Caco-2 (cell line): ENCODE measurements at regions of chr11 and their contacts with region 1.

Region 1: DNA sequence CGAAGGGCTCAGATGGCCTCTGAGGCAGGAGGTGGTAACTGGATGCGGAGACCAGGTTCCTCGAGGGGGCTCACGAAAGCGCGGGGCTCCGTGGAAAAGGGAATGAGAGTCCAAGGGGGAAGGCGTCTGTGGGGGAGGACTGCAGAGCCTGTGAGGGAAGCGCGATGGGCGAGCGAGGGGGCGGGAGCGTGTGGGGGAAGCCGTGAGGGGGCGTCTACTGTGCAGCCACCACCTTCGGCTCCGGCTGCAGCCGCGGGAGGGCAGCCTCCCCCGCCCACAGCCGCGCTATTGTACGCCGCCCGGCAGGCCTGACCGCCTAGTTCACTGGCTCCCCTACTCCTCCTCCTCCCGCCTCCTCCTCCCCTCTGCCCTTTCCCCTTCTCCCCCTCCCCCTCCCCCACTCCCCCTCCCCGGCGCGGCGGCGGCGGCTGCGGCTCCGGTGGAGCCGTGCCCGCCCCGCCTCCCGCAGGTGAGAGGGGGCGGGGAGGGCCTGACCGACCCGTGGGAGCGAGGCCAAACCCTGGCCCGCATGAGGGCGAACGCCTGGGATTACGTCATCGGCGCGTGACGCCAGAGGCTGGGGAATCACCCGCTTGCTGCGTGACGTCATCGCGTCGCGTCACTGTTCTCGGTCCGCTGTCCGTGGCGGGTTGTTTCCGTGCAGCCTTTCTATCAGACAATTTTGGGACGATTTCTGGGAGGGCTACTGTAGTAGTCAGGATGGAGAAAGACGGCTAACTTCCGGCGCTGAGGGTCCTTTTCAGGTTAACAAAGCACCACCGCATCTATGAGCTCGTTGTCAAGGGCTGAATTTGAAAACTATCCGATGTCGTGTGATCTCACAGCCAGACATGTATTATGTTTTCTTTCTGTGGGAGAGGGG is at the start of gene PAK1:
- DNase-seq: peak; percentile 98 to 99
- H3K4me3 ChIP-seq: peak within 1 kb of the TSS; percentile 93
- H3K4me3 Mint-ChIP-seq: peak within 1 kb of the TSS; percentile 93
- H3K27ac Mint-ChIP-seq: peak within 1 kb of the TSS; percentile 96
- H3K4me1 ChIP-seq: peaks cover 34% of the 10 kb centered on the region
- H3K4me1 Mint-ChIP-seq: peaks cover 26% of the 10 kb centered on the region
- H3K27me3 ChIP-seq: no peaks in the 10 kb centered on the region
- H3K27me3 Mint-ChIP-seq: no peaks in the 10 kb centered on the region
- CTCF ChIP-seq: peak; percentile 58 to 86
- total RNA-seq, gene PAK1: 81.1 and 90.1 TPM in 2 replicates

Region 2: GRCh38 chr11:77198440-77198849 is 275.6 kb before region 1 on chr11:
- CTCF ChIA-PET with region 1: interaction called, 5 read pairs
- POLR2A ChIA-PET with region 1: no interaction called
- intact Hi-C with region 1: loop called (anchors 1 kb)
- DNase-seq: peak; percentile 68 to 70
- H3K4me3 ChIP-seq: no peak overlapping the region
- H3K4me3 Mint-ChIP-seq: no peak overlapping the region
- H3K27ac Mint-ChIP-seq: no peak overlapping the region
- H3K4me1 ChIP-seq: no peaks in the 10 kb centered on the region
- H3K4me1 Mint-ChIP-seq: no peaks in the 10 kb centered on the region
- H3K27me3 ChIP-seq: no peaks in the 10 kb centered on the region
- H3K27me3 Mint-ChIP-seq: no peaks in the 10 kb centered on the region
- CTCF ChIP-seq: peak; percentile 53 to 72

Region 3: DNA sequence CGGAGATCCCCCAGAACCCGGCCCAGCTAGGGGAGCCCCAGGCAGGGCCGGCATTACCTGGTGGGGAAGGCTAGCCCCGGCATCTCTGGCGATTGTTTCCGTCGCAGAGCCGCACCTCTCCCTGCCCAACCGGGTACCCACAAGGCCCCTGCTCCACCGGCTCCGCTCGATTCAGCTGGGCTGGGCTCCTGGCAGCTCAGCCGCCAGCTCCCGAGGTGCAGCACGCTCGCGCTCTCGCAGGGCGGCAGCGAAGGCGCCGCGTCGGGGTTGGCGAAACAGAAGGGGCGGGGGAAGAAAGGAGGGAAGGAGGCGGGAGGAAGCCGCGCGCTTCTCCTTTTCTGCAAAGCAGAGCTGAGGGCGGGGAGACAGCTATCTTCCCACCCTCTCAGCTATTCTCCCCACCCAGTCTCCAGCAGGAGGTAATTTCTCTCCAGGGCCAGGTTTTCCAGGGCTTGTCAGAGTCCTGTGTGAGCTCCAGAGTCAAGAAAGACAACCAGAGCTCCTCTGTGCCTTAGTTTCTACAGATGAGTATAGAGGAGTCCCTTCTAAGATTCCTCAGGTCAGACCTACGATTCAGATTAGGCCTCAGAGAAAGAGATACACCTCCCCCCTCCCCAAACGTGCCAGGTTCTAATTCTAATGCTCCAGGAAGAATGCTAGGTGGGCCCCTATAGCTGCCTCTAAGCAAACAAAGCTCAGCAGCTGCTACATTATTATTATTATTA is 62.2 kb before region 1 on chr11:
- CTCF ChIA-PET with region 1: interaction called, 10 read pairs
- POLR2A ChIA-PET with region 1: no interaction called
- intact Hi-C with region 1: no loop called
- DNase-seq: no peak
- H3K4me3 ChIP-seq: no peak overlapping the region
- H3K4me3 Mint-ChIP-seq: no peak overlapping the region
- H3K27ac Mint-ChIP-seq: no peak overlapping the region
- H3K4me1 ChIP-seq: no peaks in the 10 kb centered on the region
- H3K4me1 Mint-ChIP-seq: peaks cover 6% of the 10 kb centered on the region
- H3K27me3 ChIP-seq: no peaks in the 10 kb centered on the region
- H3K27me3 Mint-ChIP-seq: no peaks in the 10 kb centered on the region
- CTCF ChIP-seq: no peak

Region 4: GRCh38 chr11:77457340-77457739 is 16.7 kb before region 1 on chr11:
- CTCF ChIA-PET with region 1: interaction called, 28 read pairs
- POLR2A ChIA-PET with region 1: interaction called, 9 read pairs
- intact Hi-C with region 1: loop called (anchors 1 kb)
- DNase-seq: no peak
- H3K4me3 ChIP-seq: no peak overlapping the region
- H3K4me3 Mint-ChIP-seq: no peak overlapping the region
- H3K27ac Mint-ChIP-seq: no peak overlapping the region
- H3K4me1 ChIP-seq: peaks cover 42% of the 10 kb centered on the region
- H3K4me1 Mint-ChIP-seq: peaks cover 49% of the 10 kb centered on the region
- H3K27me3 ChIP-seq: no peaks in the 10 kb centered on the region
- H3K27me3 Mint-ChIP-seq: no peaks in the 10 kb centered on the region
- CTCF ChIP-seq: no peak

Region 5: GRCh38 chr11:77547863-77548551 is 74.0 kb after region 1 on chr11:
- CTCF ChIA-PET with region 1: interaction called, 24 read pairs
- POLR2A ChIA-PET with region 1: interaction called, 10 read pairs
- intact Hi-C with region 1: loop called (anchors 1 kb)
- DNase-seq: peak; percentile 62 to 75
- H3K4me3 ChIP-seq: no peak overlapping the region
- H3K4me3 Mint-ChIP-seq: no peak overlapping the region
- H3K27ac Mint-ChIP-seq: no peak overlapping the region
- H3K4me1 ChIP-seq: peaks cover 3% of the 10 kb centered on the region; the same call in 1 of the 2 replicates
- H3K4me1 Mint-ChIP-seq: peaks cover 6% of the 10 kb centered on the region
- H3K27me3 ChIP-seq: no peaks in the 10 kb centered on the region
- H3K27me3 Mint-ChIP-seq: no peaks in the 10 kb centered on the region
- CTCF ChIP-seq: peak; percentile 73 to 74

Region 6: GRCh38 chr11:77619576-77620198 is 145.6 kb after region 1 on chr11:
- CTCF ChIA-PET with region 1: no interaction called
- POLR2A ChIA-PET with region 1: no interaction called
- intact Hi-C with region 1: loop called (anchors 1 kb)
- DNase-seq: peak in 1 of 2 experiments; percentile 82
- H3K4me3 ChIP-seq: no peak overlapping the region
- H3K4me3 Mint-ChIP-seq: no peak overlapping the region
- H3K27ac Mint-ChIP-seq: no peak overlapping the region
- H3K4me1 ChIP-seq: no peaks in the 10 kb centered on the region
- H3K4me1 Mint-ChIP-seq: no peaks in the 10 kb centered on the region
- H3K27me3 ChIP-seq: no peaks in the 10 kb centered on the region
- H3K27me3 Mint-ChIP-seq: no peaks in the 10 kb centered on the region
- CTCF ChIP-seq: peak; percentile 85 to 90